Activated CD4-positive, alpha-beta memory T cell treated with anti-CD3 and anti-CD28 coated beads for 36 hours (primary cell): ENCODE measurements at regions of chr14 and their contacts with region 1.

Region 1: DNA sequence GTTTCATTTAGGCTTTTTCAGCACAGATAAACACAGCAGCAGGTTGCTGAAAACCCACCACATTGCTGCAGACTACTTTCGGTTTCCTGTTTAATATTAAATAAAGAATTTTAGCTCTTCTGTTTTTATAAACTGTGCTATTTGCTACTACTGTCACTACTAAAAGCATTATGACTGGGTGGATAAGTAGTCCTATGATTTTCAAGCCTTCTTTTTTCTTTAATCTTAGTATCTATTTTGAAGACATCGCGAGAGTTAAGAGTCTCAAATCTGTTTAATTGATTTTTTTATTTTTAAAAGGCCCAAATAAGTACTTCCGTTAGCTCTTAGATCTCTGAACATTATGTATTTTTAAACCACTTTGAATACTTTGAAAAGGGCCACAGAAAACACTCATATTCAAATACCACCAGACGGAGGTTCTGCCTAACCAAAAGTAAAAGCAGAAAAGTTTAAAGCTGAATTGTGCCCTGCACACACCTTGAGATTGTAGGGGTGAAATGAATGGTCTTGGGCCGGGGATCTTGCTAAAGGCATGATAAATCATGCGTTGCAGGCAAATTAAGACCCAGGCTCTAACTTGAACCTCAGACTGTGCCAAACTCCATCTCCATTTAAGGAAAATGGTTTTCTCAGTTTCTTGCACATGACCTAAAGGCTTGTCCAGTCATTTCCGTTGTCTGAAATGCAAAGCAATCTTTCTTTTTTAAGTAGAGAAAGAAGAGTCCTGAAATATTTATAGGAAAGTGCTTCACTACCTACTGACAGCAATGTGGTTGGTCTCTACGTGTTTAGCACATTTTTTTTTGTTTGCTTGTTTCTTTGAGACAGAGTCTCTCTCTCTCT is 13.6 kb upstream of the FOXN3 start:
- DNase-seq: peak; percentile 75
- H3K4me3 Mint-ChIP-seq: peak overlapping the region; percentile 67
- H3K27ac Mint-ChIP-seq: peak overlapping the region; percentile 88
- H3K4me1 Mint-ChIP-seq: peaks cover 69% of the 10 kb centered on the region
- H3K27me3 Mint-ChIP-seq: no peaks in the 10 kb centered on the region

Region 2: GRCh38 chr14:89093083-89093730 is 337.4 kb before region 1 on chr14:
- CTCF ChIA-PET with region 1: no interaction called
- POLR2A ChIA-PET with region 1: no interaction called
- intact Hi-C with region 1: no loop called
- DNase-seq: no peak
- H3K4me3 Mint-ChIP-seq: no peak overlapping the region
- H3K27ac Mint-ChIP-seq: no peak overlapping the region
- H3K4me1 Mint-ChIP-seq: no peaks in the 10 kb centered on the region
- H3K27me3 Mint-ChIP-seq: no peaks in the 10 kb centered on the region

Region 3: GRCh38 chr14:89258728-89259273 is 171.8 kb before region 1 on chr14:
- CTCF ChIA-PET with region 1: no interaction called
- POLR2A ChIA-PET with region 1: no interaction called
- intact Hi-C with region 1: no loop called
- DNase-seq: no peak
- H3K4me3 Mint-ChIP-seq: no peak overlapping the region
- H3K27ac Mint-ChIP-seq: no peak overlapping the region
- H3K4me1 Mint-ChIP-seq: peaks cover 14% of the 10 kb centered on the region
- H3K27me3 Mint-ChIP-seq: no peaks in the 10 kb centered on the region

Region 4: GRCh38 chr14:89276424-89276975 is 154.1 kb before region 1 on chr14:
- CTCF ChIA-PET with region 1: no interaction called
- POLR2A ChIA-PET with region 1: no interaction called
- intact Hi-C with region 1: loop called (anchors 2 kb)
- DNase-seq: peak; percentile 92
- H3K4me3 Mint-ChIP-seq: peak overlapping the region; percentile 60
- H3K27ac Mint-ChIP-seq: peak overlapping the region; percentile 94
- H3K4me1 Mint-ChIP-seq: peaks cover 77% of the 10 kb centered on the region
- H3K27me3 Mint-ChIP-seq: no peaks in the 10 kb centered on the region

Region 5: GRCh38 chr14:89444044-89444443 is 13.4 kb after region 1 on chr14:
- CTCF ChIA-PET with region 1: no interaction called
- POLR2A ChIA-PET with region 1: interaction called, 6 read pairs
- intact Hi-C with region 1: loop called (anchors 1 kb)
- DNase-seq: peak; percentile 54
- H3K4me3 Mint-ChIP-seq: peak overlapping the region; percentile 10
- H3K27ac Mint-ChIP-seq: peak overlapping the region; percentile 64
- H3K4me1 Mint-ChIP-seq: peaks cover 44% of the 10 kb centered on the region
- H3K27me3 Mint-ChIP-seq: no peaks in the 10 kb centered on the region

Region 6: GRCh38 chr14:89767861-89768268 is 337.3 kb after region 1 on chr14:
- CTCF ChIA-PET with region 1: no interaction called
- POLR2A ChIA-PET with region 1: no interaction called
- intact Hi-C with region 1: loop called (anchors 5 kb)
- DNase-seq: peak; percentile 75
- H3K4me3 Mint-ChIP-seq: no peak overlapping the region
- H3K27ac Mint-ChIP-seq: peak overlapping the region; percentile 39
- H3K4me1 Mint-ChIP-seq: peaks cover 18% of the 10 kb centered on the region
- H3K27me3 Mint-ChIP-seq: peaks cover 2% of the 10 kb centered on the region

Region 7: DNA sequence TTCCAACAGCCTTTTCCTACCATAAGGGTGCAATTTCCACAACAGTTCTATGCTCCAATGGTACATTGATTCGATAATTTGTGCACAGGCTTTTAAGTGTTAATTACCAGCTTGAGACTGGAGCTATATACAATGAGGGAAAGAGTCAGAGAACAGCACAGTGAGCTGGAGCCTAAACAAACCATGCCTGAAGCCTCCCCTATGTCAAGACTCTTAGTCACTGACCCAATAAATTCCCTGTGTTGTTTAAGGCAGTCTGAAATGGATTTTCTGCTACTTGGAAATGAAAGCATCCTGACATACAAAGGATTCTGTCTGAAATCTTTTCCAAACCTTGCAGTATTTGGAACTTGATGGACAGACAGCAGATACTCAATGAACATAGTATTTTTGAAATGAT is 374.9 kb after region 1 on chr14:
- CTCF ChIA-PET with region 1: no interaction called
- POLR2A ChIA-PET with region 1: no interaction called
- intact Hi-C with region 1: no loop called
- DNase-seq: no peak
- H3K4me3 Mint-ChIP-seq: no peak overlapping the region
- H3K27ac Mint-ChIP-seq: no peak overlapping the region
- H3K4me1 Mint-ChIP-seq: no peaks in the 10 kb centered on the region
- H3K27me3 Mint-ChIP-seq: peaks cover 6% of the 10 kb centered on the region